Tibial artery (tissue), 4 donors: ENCODE measurements at regions of chr9 and their contacts with region 1.

Region 1: GRCh38 chr9:137223078-137223970 is 1.3 kb upstream of the RNF208 start:
- DNase-seq: peak; percentile 97 to 99
- H3K4me3 ChIP-seq: peak overlapping the region; percentile 60 to 81
- H3K27ac ChIP-seq: peak overlapping the region; percentile 89 to 93
- H3K4me1 ChIP-seq: peaks cover 0 to 53% (median 27%) of the 10 kb centered on the region in 4 donors
- H3K27me3 ChIP-seq: peaks cover 0 to 19% of the 10 kb centered on the region in 2 donors
- CTCF ChIP-seq: no peak

Region 2: GRCh38 chr9:137178201-137178938 is 45.0 kb before region 1 on chr9:
- intact Hi-C with region 1: no loop called
- DNase-seq: no peak
- H3K4me3 ChIP-seq: no peak overlapping the region
- H3K27ac ChIP-seq: no peak overlapping the region
- H3K4me1 ChIP-seq: no peaks in the 10 kb centered on the region
- H3K27me3 ChIP-seq: peaks cover 0 to under 1% of the 10 kb centered on the region in 2 donors
- CTCF ChIP-seq: no peak

Region 3: GRCh38 chr9:137188490-137189296 is 34.6 kb before region 1 on chr9 and contains the starts of genes ANAPC2 and SSNA1:
- intact Hi-C with region 1: loop called (anchors 5 kb)
- DNase-seq: peak; percentile 88 to 94
- H3K4me3 ChIP-seq: peak within 1 kb of the TSS; percentile 86 to 91
- H3K27ac ChIP-seq: peak within 1 kb of the TSS; percentile 84 to 90
- H3K4me1 ChIP-seq: peaks cover 16 to 52% (median 40%) of the 10 kb centered on the region in 4 donors
- H3K27me3 ChIP-seq: no peaks in the 10 kb centered on the region
- CTCF ChIP-seq: peak; percentile 13 to 16

Region 4: GRCh38 chr9:137564817-137565411 is 341.6 kb after region 1 on chr9:
- intact Hi-C with region 1: no loop called
- DNase-seq: no peak
- H3K4me3 ChIP-seq: no peak overlapping the region
- H3K27ac ChIP-seq: no peak overlapping the region
- H3K4me1 ChIP-seq: no peaks in the 10 kb centered on the region
- H3K27me3 ChIP-seq: no peaks in the 10 kb centered on the region
- CTCF ChIP-seq: no peak